ENCODE measurements at regions of chr16 and their contacts with region 1.

Region 1: DNA sequence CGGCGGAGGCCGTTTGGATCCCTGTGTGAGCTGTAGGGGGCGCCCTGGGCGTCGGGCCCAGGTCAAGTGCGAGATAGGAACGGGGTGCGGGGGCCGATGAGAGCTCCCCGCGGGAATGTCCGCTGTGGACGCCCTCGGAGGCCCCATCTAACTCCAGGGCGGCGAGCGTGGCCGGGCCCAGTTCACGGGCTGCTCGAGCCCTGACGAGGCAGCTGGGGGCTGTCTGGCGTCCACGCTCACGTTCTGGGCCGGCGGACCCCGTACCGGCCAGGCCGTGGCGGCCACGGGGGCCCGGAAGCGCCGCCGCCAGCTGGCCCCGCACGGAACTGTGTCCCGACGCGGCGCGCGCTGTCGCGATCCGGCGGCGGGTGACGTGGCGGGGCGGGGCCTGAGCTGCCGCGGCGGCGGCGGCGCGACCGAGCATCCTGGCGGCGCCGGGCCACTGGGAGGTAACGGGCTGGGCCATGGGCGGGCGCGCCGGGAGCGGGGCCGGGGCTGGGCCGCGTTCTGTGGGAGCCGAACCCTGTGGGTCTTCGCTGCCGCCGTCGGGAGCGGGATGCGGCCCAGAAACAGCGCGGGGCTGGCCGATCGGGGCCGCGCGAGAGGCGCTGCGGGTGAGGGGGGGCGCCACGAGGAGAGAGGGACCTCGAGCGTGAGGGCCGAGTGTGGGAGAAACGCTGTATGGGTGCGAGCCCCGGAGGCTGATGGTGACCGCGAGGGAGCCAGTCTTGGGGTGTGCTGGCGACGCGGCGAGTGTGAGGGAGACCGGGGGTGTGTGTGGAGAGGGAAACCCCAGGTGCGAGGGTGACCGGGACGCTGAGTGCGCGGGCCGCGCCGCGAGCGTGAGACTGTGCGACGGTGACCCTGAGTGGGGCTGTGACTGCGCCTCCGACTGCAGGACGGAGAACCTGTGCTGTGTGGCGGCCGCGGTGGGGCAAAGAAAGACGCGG is at the start of gene SLC7A6:
- DNase-seq: peak; percentile 81
- H3K4me3 Mint-ChIP-seq: peak within 1 kb of the TSS; percentile 82
- H3K27ac Mint-ChIP-seq: peak within 1 kb of the TSS; percentile 98
- H3K4me1 Mint-ChIP-seq: peaks cover 52% of the 10 kb centered on the region
- H3K27me3 Mint-ChIP-seq: no peaks in the 10 kb centered on the region
- total RNA-seq, gene SLC7A6: 116 to 130 TPM

Region 2: GRCh38 chr16:68244903-68245853 is 19.2 kb before region 1 on chr16 and contains the start of gene PLA2G15:
- CTCF ChIA-PET with region 1: interaction called, 21 read pairs
- POLR2A ChIA-PET with region 1: interaction called, 3 read pairs
- DNase-seq: peak; percentile 95
- H3K4me3 Mint-ChIP-seq: peak within 1 kb of the TSS; percentile 92
- H3K27ac Mint-ChIP-seq: peak within 1 kb of the TSS; percentile 83
- H3K4me1 Mint-ChIP-seq: peaks cover 19% of the 10 kb centered on the region
- H3K27me3 Mint-ChIP-seq: no peaks in the 10 kb centered on the region
- total RNA-seq, gene PLA2G15: 8.4 to 10.1 TPM

Region 3: DNA sequence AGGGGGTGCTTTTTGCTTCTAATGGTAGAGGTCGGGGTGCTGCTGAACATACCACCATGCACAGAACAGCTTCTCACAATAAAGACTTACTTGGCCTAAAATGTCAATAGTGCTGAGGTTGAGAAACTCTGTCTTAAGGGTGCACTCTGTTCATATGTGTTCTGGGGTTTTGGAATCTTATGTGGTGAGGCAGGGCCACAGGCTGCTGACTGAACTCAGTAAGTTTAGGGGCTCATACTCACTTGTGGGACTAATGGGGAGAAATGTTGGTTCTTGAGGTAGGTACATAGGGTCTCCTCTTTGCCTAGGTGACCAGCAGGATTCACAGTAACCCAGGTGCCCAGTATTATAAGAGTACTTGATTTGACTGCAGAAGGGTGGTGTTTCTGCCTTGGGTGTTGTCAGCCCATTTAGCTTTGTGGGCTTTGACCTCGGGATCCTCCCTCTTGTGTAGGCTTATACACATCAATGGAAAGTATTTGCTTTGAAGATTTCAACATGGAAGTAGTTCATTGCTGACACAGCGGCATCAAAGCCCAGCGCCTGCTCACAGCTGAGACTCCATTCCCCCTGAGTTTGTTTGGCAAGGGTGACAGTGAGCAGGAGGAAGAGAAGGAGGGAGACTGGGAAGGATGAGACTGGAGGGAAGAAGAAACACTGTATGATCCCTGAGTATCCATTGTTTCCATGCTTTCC is 17.1 kb after region 1 on chr16:
- CTCF ChIA-PET with region 1: interaction called, 54 read pairs
- POLR2A ChIA-PET with region 1: no interaction called
- DNase-seq: peak; percentile 49
- H3K4me3 Mint-ChIP-seq: peak overlapping the region; percentile 10
- H3K27ac Mint-ChIP-seq: peak overlapping the region; percentile 88
- H3K4me1 Mint-ChIP-seq: peaks cover 73% of the 10 kb centered on the region
- H3K27me3 Mint-ChIP-seq: no peaks in the 10 kb centered on the region

Region 4: GRCh38 chr16:68298907-68299561 is 34.6 kb after region 1 on chr16:
- CTCF ChIA-PET with region 1: interaction called, 15 read pairs
- POLR2A ChIA-PET with region 1: no interaction called
- DNase-seq: no peak
- H3K4me3 Mint-ChIP-seq: no peak overlapping the region
- H3K27ac Mint-ChIP-seq: no peak overlapping the region
- H3K4me1 Mint-ChIP-seq: peaks cover 14% of the 10 kb centered on the region
- H3K27me3 Mint-ChIP-seq: no peaks in the 10 kb centered on the region

Region 5: GRCh38 chr16:68319185-68319908 is 54.9 kb after region 1 on chr16:
- CTCF ChIA-PET with region 1: interaction called, 14 read pairs
- POLR2A ChIA-PET with region 1: no interaction called
- DNase-seq: no peak
- H3K4me3 Mint-ChIP-seq: no peak overlapping the region
- H3K27ac Mint-ChIP-seq: no peak overlapping the region
- H3K4me1 Mint-ChIP-seq: peaks cover 24% of the 10 kb centered on the region
- H3K27me3 Mint-ChIP-seq: no peaks in the 10 kb centered on the region

Region 6: DNA sequence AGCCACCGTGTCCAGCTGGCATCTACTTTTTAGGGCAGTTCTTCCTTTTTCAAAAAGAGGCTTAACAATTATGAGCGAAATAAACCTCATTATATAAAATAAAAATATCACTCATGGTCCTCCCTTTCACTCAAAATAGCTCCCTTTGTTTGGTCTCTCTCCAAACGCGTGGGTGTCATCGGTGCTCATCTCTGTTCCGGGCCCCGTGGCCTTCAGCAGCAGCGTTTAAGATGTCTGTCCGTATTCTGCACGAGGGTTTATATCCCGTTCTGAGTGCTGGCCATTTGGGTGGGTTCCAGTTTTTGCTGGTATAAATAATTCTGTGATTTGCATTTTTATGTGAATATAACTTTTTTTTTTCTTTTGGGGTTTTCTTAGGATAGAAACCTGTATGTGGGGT is 79.8 kb after region 1 on chr16:
- CTCF ChIA-PET with region 1: interaction called, 12 read pairs
- POLR2A ChIA-PET with region 1: no interaction called
- DNase-seq: no peak
- H3K4me3 Mint-ChIP-seq: no peak overlapping the region
- H3K27ac Mint-ChIP-seq: no peak overlapping the region
- H3K4me1 Mint-ChIP-seq: peaks cover 20% of the 10 kb centered on the region
- H3K27me3 Mint-ChIP-seq: no peaks in the 10 kb centered on the region